GM12878 (cell line): ENCODE measurements at regions of chr1 and their contacts with region 1.

Region 1: DNA sequence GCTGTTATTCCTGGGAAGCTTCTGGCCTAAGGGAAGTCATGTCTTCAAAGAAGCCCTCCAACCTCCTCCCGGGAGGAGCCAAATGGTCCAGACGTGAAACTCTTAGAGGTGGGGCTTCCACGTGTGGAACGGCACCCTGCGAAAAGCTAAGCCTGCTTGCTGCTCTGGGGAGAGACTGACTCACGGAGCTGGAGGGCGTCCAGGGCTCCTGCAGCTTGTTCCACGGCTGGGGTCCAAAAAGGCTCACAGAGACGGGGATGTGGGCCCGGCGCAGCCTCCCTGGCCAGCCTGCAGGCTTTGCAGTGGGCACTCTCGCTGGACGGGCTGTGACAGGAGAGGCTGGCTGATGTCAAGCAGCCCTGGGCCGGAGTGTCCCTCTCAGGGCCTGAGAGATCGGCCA is 105.1 kb downstream of the COLGALT2 start:
- DNase-seq: no peak
- ATAC-seq: no peak; the same call in 2 of the 3 replicates
- H3K4me3 ChIP-seq: no peak overlapping the region
- H3K27ac ChIP-seq: no peak overlapping the region
- H3K4me1 ChIP-seq: no peaks in the 10 kb centered on the region
- H3K27me3 ChIP-seq: no peaks in the 10 kb centered on the region
- CTCF ChIP-seq: no peak
- EP300 ChIP-seq: no peak
- POLR2A ChIP-seq: no peak
- RAD21 ChIP-seq: no peak

Region 2: GRCh38 chr1:183443011-183443410 is 489.4 kb before region 1 on chr1:
- CTCF ChIA-PET with region 1: no interaction called
- POLR2A ChIA-PET with region 1: no interaction called
- RAD21 ChIA-PET with region 1: no interaction called
- SMC1A ChIA-PET with region 1: no interaction called
- in situ Hi-C with region 1: no loop called
- intact Hi-C with region 1: no loop called
- DNase-seq: no peak
- ATAC-seq: no peak
- H3K4me3 ChIP-seq: no peak overlapping the region
- H3K27ac ChIP-seq: no peak overlapping the region
- H3K4me1 ChIP-seq: no peaks in the 10 kb centered on the region
- H3K27me3 ChIP-seq: no peaks in the 10 kb centered on the region
- CTCF ChIP-seq: no peak
- EP300 ChIP-seq: no peak
- POLR2A ChIP-seq: no peak
- RAD21 ChIP-seq: no peak

Region 3: GRCh38 chr1:183942933-183943693 is 10.7 kb after region 1 on chr1:
- CTCF ChIA-PET with region 1: interaction called, 4 read pairs
- POLR2A ChIA-PET with region 1: interaction called, 5 read pairs
- RAD21 ChIA-PET with region 1: interaction called, 5 read pairs
- SMC1A ChIA-PET with region 1: interaction called, 22 read pairs
- in situ Hi-C with region 1: no loop called
- intact Hi-C with region 1: no loop called
- DNase-seq: peak; percentile 34
- ATAC-seq: peak; percentile 98
- H3K4me3 ChIP-seq: no peak overlapping the region
- H3K27ac ChIP-seq: no peak overlapping the region
- H3K4me1 ChIP-seq: 0 out of 2 replicates have a peak, but pooled peaks cover 3% of the 10 kb centered on the region
- H3K27me3 ChIP-seq: no peaks in the 10 kb centered on the region; a peak in 1 of 4 replicates
- CTCF ChIP-seq: no peak
- EP300 ChIP-seq: no peak
- POLR2A ChIP-seq: no peak
- RAD21 ChIP-seq: no peak